HEK293 (cell line): ENCODE measurements at regions of chr6 and their contacts with region 1.

Region 1: GRCh38 chr6:70520575-70520974 is 46.2 kb upstream of the SDHAF4 start:
- H3K4me3 ChIP-seq: no peak overlapping the region
- H3K27ac ChIP-seq: no peak overlapping the region
- H3K4me1 ChIP-seq: no peaks in the 10 kb centered on the region
- CTCF ChIP-seq: 0 out of 2 replicates have a peak, but pooled peaks have one; percentile 27

Region 2: DNA sequence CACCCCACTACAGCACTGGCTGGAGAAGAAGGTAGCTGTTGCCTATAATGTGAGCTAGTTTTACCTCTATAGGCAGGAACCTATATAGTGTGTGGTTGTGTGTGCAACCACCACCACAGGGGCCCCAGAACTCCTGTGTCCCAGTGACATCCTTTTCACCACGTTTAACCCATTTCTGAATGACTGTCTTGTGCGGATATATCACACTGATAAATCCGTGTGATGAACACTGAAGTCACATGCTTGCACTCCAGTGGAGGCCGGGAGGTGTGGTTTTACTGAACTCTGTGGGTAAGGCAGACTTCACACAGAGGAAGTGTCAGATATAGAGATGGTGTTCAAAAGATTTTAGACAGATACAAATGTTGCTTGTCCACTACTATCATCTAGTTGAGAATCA is 78.6 kb after region 1 on chr6:
- CTCF ChIA-PET with region 1: no interaction called
- POLR2A ChIA-PET with region 1: no interaction called
- H3K4me3 ChIP-seq: no peak overlapping the region
- H3K27ac ChIP-seq: no peak overlapping the region
- H3K4me1 ChIP-seq: no peaks in the 10 kb centered on the region
- CTCF ChIP-seq: no peak

Region 3: DNA sequence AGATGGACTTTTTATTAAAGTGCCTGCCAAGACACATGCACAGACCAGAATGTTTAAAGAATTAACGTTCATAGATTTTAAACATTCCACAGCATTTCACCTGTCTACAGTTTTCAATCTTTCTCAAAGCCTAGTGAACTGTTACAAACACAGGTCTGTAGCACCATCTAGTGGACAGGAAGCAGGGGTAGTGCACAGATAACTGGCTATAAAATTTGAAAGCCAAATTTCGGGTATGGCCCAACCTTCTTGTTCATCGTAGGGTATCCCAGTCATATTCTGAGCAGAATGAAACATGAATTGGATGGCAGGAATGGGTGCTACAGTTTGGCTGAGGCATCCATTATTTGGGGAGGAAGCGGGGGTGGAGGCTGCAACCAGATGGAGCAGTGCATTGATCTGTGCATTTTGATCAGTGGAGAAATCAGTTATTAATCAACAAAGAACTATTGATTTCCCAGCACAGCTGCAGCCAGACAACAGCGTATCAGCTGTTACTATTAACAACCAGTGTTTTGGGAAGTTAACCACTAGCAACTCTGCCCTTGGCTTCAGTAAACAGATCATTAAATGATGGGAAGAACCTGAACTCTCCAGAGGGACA is 492.4 kb after region 1 on chr6:
- CTCF ChIA-PET with region 1: interaction called, 11 read pairs
- POLR2A ChIA-PET with region 1: no interaction called
- H3K4me3 ChIP-seq: no peak overlapping the region
- H3K27ac ChIP-seq: no peak overlapping the region
- H3K4me1 ChIP-seq: no peaks in the 10 kb centered on the region
- CTCF ChIP-seq: peak; percentile 42; the same call in 1 of the 2 replicates